ENCODE measurements at regions of chr10 and their contacts with region 1.

Region 1: GRCh38 chr10:62038609-62039190 is 137.2 kb downstream of the ARID5B start:
- DNase-seq: peak; percentile 85
- H3K4me3 ChIP-seq: peak overlapping the region; percentile 18
- H3K27ac ChIP-seq: peak overlapping the region; percentile 56
- H3K4me1 ChIP-seq: peaks cover 80% of the 10 kb centered on the region
- CTCF ChIP-seq: peak; percentile 98

Region 2: DNA sequence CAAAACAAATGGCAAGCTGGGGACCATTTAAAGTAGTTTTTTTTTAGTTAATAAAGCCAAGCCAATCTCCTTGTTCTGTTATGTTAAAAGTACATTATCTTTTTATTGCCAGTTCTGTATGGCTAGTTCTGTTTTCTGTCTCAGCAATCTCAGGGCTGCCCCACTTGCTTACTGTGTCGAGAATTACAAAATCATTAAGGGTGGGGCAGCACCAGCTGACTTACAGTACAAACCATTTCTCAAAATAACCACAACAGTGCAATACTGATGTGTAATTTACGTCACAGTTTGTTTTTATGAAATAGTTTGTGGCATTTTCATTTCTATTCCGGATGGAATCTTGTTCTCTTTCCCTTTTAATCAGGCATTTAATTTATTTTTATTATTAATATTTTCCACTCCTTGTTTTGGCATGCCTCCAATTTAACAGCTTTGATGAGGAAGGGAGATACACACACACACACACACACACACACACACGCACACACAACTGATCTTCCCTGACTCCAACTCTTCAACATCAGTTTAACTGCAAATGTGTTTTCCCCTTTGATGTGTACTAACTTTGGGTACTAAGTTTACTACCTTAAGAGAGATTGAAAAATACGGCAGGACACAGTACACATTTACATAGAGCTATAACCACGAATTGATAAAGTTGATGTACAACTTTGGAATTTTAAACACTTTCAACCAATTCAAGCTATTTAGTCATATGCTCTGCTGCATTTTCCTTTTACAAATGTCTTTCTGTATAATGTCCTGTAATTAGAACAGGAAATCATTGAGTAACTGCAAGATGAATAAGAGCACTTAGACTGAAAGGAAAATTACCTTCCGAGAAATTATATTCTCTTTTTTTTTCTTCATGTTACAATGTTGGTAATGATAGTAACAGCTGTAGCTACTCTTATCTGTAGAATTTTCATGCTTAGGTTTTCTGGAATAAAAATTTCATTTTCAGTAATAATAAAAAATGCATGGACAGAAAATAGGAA is 45.7 kb before region 1 on chr10:
- CTCF ChIA-PET with region 1: no interaction called
- POLR2A ChIA-PET with region 1: interaction called, 46 read pairs
- intact Hi-C with region 1: loop called (anchors 2 kb)
- DNase-seq: peak; percentile 67
- H3K4me3 ChIP-seq: peak overlapping the region; percentile 58
- H3K27ac ChIP-seq: peak overlapping the region; percentile 80
- H3K4me1 ChIP-seq: peaks cover 100% of the 10 kb centered on the region
- CTCF ChIP-seq: no peak

Region 3: DNA sequence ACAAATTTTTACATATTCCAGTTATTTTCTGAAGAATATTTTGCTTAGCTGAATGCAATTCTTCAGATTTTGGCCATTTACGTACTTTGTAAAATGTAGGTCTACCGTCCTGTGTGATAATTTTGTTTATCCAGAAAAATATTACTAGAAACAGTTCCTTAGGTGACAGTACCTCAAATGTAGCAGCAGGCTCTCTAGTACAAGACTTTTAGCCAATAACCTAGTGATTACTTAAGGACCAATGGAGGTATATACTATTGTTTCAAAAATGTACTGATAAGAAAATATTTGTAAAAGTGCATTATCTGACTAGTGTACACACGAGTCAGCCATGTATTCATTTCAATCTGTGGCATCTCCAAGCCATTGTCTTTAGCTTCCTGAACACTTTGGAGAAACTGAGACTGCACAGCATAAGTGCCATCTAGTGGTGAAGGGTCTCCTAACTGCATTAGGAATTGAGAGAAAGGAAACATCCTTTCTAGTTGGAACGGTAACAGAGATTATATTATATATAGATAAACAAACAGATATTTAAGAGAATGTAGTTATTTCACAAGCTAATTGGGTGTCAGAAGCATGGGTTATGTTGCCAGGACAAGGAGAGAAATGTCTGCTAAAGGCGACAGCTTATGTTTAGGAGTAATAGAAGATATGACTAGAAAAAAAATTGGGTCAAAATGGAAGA is 206.2 kb after region 1 on chr10:
- CTCF ChIA-PET with region 1: interaction called, 5 read pairs
- POLR2A ChIA-PET with region 1: interaction called, 29 read pairs
- intact Hi-C with region 1: loop called (anchors 1 kb)
- DNase-seq: peak; percentile 86
- H3K4me3 ChIP-seq: no peak overlapping the region
- H3K27ac ChIP-seq: peak overlapping the region; percentile 67
- H3K4me1 ChIP-seq: peaks cover 26% of the 10 kb centered on the region
- CTCF ChIP-seq: peak; percentile 99